HCT116 (cell line): ENCODE measurements at regions of chr1 and their contacts with region 1.

Region 1: DNA sequence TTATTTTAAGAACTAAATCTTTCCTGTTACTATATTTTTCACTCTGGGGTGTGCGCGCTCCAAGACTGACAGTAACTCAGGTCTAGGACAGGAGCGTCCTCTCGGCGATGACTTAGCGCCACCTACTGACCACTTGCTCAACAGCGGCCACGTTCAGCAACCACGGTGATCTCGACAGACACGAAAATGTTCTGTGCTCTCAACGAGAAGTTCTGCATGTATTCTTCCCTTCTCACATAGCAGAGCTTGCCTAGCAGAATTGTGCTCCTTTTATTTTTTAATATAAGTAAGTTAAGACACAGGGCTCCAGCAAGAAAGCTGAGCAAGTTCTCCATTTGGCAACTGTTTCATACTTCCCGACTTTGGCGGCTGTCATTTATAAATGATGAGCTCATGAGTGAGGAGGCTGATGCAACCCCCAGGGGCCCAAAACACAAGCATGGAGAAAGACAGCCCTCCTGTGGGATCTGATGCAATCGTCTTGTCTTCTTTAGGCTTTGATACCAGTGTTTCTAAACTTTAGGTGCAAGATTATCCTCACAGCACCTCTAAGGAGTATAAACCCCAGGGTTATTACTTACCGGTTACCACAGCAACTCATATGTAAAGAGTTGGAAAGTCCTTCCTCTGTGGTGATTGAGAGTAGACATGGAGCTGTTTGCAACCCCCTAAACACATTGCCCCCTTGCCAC is 92.6 kb downstream of the HHIPL2 start:
- DNase-seq: peak; percentile 64
- ATAC-seq: peak; percentile 98
- H3K4me3 ChIP-seq: no peak overlapping the region
- H3K27ac ChIP-seq: no peak overlapping the region
- H3K4me1 ChIP-seq: peaks cover 0 to 5% of the 10 kb centered on the region in 2 experiments; a peak in 1 of 4 replicates
- H3K27me3 ChIP-seq: no peaks in the 10 kb centered on the region
- CTCF ChIP-seq: peak; percentile 88 to 97 (median 94)
- POLR2A ChIP-seq: no peak
- RAD21 ChIP-seq: peak; percentile 98

Region 2: GRCh38 chr1:220879076-220879508 is 1576.2 kb before region 1 on chr1 and contains the start of gene HLX:
- CTCF ChIA-PET with region 1: interaction called, 4 read pairs
- POLR2A ChIA-PET with region 1: no interaction called
- RAD21 ChIA-PET with region 1: no interaction called
- intact Hi-C with region 1: loop called (anchors 10 kb)
- DNase-seq: peak; percentile 56
- ATAC-seq: peak; percentile 91
- H3K4me3 ChIP-seq: peak within 1 kb of the TSS; percentile 58 to 75
- H3K27ac ChIP-seq: peak within 1 kb of the TSS; percentile 36; the same call in 1 of the 2 replicates
- H3K4me1 ChIP-seq: peaks cover 3 to 11% of the 10 kb centered on the region in 2 experiments; a peak in 3 of 4 replicates
- H3K27me3 ChIP-seq: no peaks in the 10 kb centered on the region
- CTCF ChIP-seq: no peak
- POLR2A ChIP-seq: peak; percentile 34
- RAD21 ChIP-seq: no peak
- total RNA-seq, gene HLX: 1.8 TPM

Region 3: DNA sequence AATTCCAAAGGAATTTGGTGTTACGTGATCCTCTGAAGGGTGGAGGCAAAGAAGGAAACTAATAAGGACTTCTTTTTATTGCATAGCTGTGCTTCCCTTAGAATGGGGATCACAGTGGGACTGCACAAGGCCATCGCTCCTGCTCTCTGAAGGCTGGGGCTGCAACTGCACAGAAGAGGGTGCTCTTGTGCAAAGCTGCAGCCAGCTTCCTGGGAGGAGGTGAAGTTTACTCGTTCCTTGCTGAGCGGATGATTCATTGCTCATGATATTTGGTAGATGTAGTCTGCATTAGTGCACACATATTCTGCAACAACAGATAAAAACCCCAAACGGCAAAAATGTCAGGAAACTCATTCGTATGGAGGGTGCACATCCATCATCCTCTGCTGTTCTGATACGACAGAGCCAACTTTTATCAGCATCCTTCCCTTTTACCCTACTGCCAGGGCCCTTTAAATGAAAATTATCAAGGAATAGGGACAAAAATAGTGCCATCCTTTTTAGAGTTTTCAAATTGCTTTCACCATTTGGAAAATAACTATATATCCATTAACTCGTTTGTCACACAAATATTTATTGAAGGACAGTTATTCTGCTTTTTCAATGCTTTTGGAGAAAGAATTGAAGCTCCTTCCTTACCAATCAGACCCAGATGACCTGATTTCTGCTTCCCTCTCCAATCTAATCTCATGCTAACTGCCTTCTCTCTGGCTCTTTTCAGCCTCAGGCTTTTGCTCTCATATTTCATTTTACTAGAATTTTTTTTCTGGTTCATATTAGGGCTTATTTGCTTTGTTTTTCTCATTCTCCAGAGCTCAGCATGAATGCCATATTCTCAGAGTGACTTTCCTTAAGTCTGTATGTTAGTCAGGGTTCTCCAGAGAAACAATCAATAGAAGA is 977.0 kb before region 1 on chr1:
- CTCF ChIA-PET with region 1: interaction called, 17 read pairs
- POLR2A ChIA-PET with region 1: no interaction called
- RAD21 ChIA-PET with region 1: interaction called, 3 to 6 read pairs
- intact Hi-C with region 1: loop called (anchors 2 kb)
- DNase-seq: peak; percentile 47
- ATAC-seq: peak; percentile 100
- H3K4me3 ChIP-seq: no peak overlapping the region
- H3K27ac ChIP-seq: no peak overlapping the region
- H3K4me1 ChIP-seq: peaks cover 0 to 6% of the 10 kb centered on the region in 2 experiments; a peak in 2 of 4 replicates
- H3K27me3 ChIP-seq: no peaks in the 10 kb centered on the region
- CTCF ChIP-seq: peak; percentile 62 to 76 (median 76); a peak in 5 of 6 replicates
- POLR2A ChIP-seq: no peak
- RAD21 ChIP-seq: peak; percentile 94

Region 4: DNA sequence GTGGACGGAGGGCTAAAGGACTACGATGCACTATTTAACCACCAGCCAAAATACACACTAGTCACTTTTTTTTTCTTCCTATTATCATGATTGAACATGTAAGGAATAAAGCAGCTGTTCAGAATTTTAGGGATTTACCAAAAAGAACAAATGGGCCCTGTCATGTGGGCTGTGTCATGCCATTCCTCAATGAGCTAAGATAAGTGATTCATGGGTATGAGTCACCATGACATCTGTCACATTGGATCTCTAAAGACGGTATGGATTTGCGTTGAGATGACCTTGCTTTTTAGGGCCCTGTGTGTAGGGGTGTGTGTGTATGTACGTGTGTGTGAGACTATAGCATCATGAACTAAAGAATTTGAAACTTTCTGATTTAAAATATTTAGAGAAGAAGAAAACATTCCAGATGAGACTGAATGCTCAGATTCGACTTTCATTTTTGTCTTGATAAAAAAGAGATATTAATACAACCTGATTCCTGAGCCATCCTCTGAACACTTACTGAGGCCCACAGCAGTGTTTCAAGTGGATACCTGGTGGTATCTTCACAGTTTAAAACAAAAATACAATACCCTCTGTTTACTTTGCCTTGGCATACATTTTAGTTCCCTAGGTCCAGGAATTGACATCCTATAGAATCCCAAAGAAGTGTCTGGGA is 467.3 kb before region 1 on chr1:
- CTCF ChIA-PET with region 1: no interaction called
- POLR2A ChIA-PET with region 1: no interaction called
- RAD21 ChIA-PET with region 1: no interaction called
- intact Hi-C with region 1: loop called (anchors 10 kb)
- DNase-seq: no peak
- ATAC-seq: peak; percentile 70
- H3K4me3 ChIP-seq: no peak overlapping the region
- H3K27ac ChIP-seq: no peak overlapping the region
- H3K4me1 ChIP-seq: peaks cover 0 to 18% of the 10 kb centered on the region in 2 experiments; a peak in 2 of 4 replicates
- H3K27me3 ChIP-seq: no peaks in the 10 kb centered on the region
- CTCF ChIP-seq: no peak
- POLR2A ChIP-seq: no peak
- RAD21 ChIP-seq: no peak

Region 5: DNA sequence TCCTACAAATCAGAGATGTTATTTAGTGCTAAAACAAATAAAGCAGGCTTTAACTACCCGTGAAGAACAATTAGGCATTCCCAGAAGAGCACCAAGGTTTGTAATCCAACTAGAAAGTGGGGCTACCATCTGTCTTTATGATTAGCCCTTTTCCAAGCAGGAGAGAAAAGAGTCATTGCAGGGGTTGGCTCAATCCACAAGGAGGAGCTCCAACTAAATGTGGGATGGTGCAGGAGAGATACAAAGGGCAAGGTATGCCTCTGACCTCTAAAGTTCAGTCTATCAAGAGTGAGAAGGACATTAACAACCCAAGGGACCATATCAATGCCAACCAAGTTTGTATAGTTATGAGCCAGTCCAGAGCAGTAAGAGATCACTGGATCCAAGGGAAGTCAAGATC is 330.7 kb before region 1 on chr1:
- CTCF ChIA-PET with region 1: interaction called, 25 read pairs
- POLR2A ChIA-PET with region 1: no interaction called
- RAD21 ChIA-PET with region 1: no interaction called
- intact Hi-C with region 1: loop called (anchors 1 kb)
- DNase-seq: no peak
- ATAC-seq: peak; percentile 81
- H3K4me3 ChIP-seq: no peak overlapping the region
- H3K27ac ChIP-seq: no peak overlapping the region
- H3K4me1 ChIP-seq: no peaks in the 10 kb centered on the region
- H3K27me3 ChIP-seq: no peaks in the 10 kb centered on the region
- CTCF ChIP-seq: peak; percentile 33 to 65 (median 47); a peak in 4 of 6 replicates
- POLR2A ChIP-seq: no peak
- RAD21 ChIP-seq: peak; percentile 70

Region 6: GRCh38 chr1:222465211-222466041 is 10.1 kb after region 1 on chr1:
- CTCF ChIA-PET with region 1: interaction called, 10 read pairs
- POLR2A ChIA-PET with region 1: no interaction called
- RAD21 ChIA-PET with region 1: no interaction called
- intact Hi-C with region 1: no loop called
- DNase-seq: peak; percentile 85
- ATAC-seq: peak; percentile 98
- H3K4me3 ChIP-seq: peak overlapping the region; percentile 28 to 43
- H3K27ac ChIP-seq: peak overlapping the region; percentile 44
- H3K4me1 ChIP-seq: peaks cover 2 to 12% of the 10 kb centered on the region in 2 experiments; a peak in 3 of 4 replicates
- H3K27me3 ChIP-seq: no peaks in the 10 kb centered on the region
- CTCF ChIP-seq: peak; percentile 94 to 98 (median 96)
- POLR2A ChIP-seq: no peak
- RAD21 ChIP-seq: peak; percentile 98